ENCODE measurements at regions of chr3 and their contacts with region 1.

Region 1: GRCh38 chr3:46368569-46368968 is 2.2 kb upstream of the CCR5 start:
- DNase-seq: peak; percentile 54
- CTCF ChIP-seq: peak; percentile 42

Region 2: DNA sequence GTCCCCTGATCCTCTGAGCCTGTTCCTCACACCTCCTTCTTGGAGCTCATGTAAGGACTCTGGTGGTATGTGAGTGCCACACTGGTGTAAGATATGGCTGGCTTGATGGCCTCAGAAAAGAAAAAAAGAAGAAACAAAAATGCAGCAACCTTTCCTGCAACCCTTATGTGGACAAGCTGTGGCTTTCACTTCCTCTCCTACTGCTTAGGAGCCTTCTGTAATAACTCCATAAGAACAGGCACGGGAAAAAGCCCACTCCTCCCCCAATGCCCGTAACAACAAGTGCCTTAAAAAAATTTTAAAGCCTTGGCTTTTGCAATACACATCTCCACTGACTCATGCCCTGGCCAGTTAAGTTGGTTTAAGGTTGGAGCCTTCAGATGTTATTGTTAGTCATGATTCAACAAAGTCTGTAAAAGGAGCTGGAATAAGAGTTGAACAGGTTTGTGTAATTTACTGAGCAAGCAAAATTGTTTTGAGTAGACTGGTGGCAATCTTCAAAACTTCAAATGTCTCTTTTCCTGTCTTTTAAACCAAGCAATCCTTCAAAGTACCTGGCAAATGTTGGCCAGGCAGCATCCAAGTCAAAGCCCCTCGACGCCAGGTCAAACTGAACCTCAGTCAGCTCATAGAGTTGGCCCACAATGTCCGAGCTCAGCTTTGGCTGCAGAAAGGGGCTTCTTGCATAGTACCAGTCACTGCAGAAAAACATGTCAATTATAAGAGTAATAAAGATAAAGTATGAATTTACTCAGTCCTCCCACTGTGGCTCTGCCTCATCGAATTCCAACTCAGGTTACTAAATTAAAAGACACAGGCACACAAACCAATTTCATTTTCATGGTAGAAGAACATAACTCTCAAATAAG is 395.8 kb before region 1 on chr3:
- in situ Hi-C with region 1: no loop called
- DNase-seq: no peak
- CTCF ChIP-seq: no peak

Region 3: DNA sequence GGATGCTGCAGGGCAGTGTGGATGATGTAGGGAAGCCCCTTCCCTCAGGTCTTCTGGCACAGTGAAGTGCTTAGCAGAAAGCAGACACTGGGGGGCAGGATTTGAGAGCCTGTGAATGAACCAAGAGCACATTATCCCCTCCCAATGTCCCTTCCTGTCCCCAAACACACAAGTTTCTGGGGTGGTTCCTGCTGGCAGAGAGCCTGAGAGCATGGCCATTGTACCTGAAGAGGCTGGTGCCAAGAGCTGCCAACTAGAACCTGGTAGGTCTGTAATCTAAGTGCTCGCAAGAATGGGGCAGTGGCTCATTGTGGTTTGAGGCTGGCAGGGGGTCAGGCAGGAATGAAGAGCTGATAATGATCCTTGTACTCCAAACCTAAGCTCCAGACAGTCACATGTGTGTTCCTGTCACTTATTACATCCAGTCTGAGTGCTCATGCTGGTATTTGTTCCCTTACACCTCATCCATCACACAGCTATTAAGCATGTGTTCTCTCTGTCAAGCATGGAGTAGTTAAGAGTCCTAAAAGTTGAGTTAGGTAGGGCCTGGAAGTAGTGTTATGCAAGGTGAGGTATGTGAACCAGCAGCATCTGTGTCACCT is 153.7 kb before region 1 on chr3:
- in situ Hi-C with region 1: loop called (anchors 5 kb)
- DNase-seq: no peak
- CTCF ChIP-seq: peak; percentile 36

Region 4: GRCh38 chr3:46276502-46277099 is 92.0 kb before region 1 on chr3:
- in situ Hi-C with region 1: loop called (anchors 10 kb)
- DNase-seq: peak; percentile 34
- CTCF ChIP-seq: peak; percentile 43

Measured in GM13976 (cell line).